ENCODE measurements at regions of chr5 and their contacts with region 1.

Region 1: DNA sequence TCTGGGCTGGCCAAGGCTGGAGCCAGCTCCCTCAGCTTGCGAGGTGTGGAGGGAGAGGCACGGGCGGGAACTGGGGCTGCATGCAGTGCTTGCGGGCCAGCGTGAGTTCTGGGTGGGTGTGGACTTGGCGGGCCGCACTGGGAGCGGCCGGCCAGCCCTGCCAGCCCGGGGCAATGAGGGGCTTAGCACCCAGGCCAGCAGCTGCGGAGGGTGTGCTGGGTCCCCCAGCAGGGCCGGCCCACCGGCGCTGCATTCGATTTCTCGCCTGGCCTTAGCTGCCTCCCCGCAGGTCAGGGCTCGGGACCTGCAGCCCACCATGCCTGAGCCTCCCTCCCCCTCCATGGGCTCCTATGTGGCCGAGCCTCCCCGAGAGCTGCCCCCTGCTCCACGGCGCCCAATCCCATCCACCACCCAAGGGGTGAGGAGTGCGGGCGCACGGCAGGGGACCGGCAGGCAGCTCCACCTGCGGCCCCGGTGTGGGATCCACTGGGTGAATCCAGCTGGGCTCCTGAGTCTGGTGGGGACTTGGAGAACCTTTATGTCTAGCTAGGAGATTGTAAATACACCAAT is 302.6 kb upstream of the ADAMTS16 start:
- DNase-seq: no peak
- H3K4me3 ChIP-seq: no peak overlapping the region
- H3K27ac ChIP-seq: no peak overlapping the region
- H3K4me1 ChIP-seq: no peaks in the 10 kb centered on the region
- H3K27me3 ChIP-seq: no peaks in the 10 kb centered on the region
- CTCF ChIP-seq: no peak
- EP300 ChIP-seq: no peak
- POLR2A ChIP-seq: no peak

Region 2: DNA sequence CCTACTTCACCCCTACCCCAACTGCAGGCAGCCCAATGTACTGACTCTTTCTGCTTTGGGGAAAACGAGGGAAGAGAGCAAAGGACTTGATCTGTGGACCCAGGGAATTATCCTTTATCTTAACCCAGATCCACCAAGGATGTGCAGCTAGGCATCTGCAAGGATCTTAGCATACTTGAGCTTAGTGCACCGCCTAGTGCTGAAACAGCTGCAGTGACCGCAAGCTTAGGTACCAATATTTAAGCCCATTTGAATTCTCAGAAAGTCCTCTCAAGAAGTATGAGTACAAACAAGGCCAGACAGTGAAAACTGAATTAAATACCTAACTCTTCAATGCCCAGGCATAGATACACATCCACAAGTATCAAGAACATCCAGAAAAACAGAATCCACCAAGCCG is 274.2 kb before region 1 on chr5:
- in situ Hi-C with region 1: no loop called
- intact Hi-C with region 1: no loop called
- DNase-seq: no peak
- H3K4me3 ChIP-seq: no peak overlapping the region
- H3K27ac ChIP-seq: no peak overlapping the region
- H3K4me1 ChIP-seq: no peaks in the 10 kb centered on the region
- H3K27me3 ChIP-seq: no peaks in the 10 kb centered on the region
- CTCF ChIP-seq: no peak
- EP300 ChIP-seq: no peak
- POLR2A ChIP-seq: no peak

Region 3: GRCh38 chr5:5063533-5063953 is 226.0 kb after region 1 on chr5:
- in situ Hi-C with region 1: no loop called
- intact Hi-C with region 1: no loop called
- DNase-seq: no peak
- H3K4me3 ChIP-seq: no peak overlapping the region
- H3K27ac ChIP-seq: no peak overlapping the region
- H3K4me1 ChIP-seq: no peaks in the 10 kb centered on the region
- H3K27me3 ChIP-seq: no peaks in the 10 kb centered on the region
- CTCF ChIP-seq: no peak
- EP300 ChIP-seq: no peak
- POLR2A ChIP-seq: no peak

Region 4: DNA sequence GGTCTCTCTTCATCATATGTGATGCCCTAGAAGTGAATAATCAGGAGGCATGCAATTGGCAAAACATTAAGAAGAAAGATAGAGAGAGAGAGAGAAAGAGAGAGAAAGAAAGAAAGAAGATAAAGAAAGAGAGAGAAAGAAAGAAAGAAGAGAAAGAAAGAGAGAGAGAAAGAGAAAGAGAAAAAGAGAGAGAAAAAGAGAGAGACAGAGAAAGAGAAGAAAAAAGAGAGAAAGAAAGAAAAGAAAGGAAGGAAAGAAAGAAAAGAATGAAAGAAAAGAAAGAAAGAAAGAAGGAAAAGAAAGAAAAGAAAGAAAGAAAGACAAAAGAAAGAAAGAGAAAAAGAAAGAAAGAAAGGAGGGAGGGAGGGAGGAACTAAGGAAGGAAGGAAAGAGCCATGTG is 903.8 kb after region 1 on chr5:
- in situ Hi-C with region 1: no loop called
- intact Hi-C with region 1: loop called (anchors 5 kb)
- DNase-seq: no peak
- H3K4me3 ChIP-seq: no peak overlapping the region
- H3K27ac ChIP-seq: no peak overlapping the region
- H3K4me1 ChIP-seq: no peaks in the 10 kb centered on the region
- H3K27me3 ChIP-seq: no peaks in the 10 kb centered on the region
- CTCF ChIP-seq: no peak
- EP300 ChIP-seq: no peak
- POLR2A ChIP-seq: no peak